Aorta (tissue), 5 donors: ENCODE measurements at regions of chr1 and their contacts with region 1.

Region 1: DNA sequence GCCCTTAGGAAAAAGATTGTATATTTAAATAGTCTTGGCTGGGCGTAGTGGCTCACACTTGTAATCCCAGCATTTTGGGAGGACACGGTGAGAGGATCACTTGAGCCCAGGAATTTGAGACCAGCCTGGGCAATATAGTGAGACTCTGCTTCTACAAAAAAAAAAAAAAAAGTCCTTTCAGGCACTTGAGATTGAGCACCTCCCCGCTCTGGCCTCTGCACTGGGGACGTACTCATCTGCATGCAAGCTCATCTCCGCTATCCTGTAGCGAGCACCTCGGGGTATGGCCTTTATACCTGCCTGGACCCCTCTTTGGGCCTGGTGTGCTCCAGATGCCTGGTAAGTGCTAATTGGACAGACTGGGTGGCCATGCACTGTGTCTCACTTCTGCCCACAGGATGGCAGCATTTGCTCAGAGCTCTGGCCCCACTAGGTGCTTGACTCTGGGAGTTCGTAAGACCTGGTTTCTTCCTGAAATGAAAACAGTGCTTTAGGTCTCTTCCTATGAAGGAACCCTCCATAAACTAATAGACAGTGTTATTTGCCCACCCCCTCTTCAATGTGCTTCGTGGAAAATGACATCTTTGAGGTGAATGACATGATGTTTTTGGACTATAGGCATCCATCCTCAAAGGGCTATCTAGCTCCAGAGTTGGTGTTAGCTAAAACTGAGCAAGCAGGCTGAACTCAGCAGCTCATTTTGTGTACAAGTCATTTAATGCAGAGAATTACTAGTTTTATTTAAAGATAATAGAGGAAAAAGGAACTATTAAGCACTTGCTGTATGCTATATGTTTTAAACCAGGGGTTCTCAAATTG is 61.7 kb upstream of the ADAR start:
- DNase-seq: peak; percentile 78 to 81
- ATAC-seq: peak; percentile 84
- H3K4me3 ChIP-seq: no peak overlapping the region
- H3K27ac ChIP-seq: no peak overlapping the region
- H3K4me1 ChIP-seq: no peaks in the 10 kb centered on the region
- H3K27me3 ChIP-seq: no peaks in the 10 kb centered on the region

Region 2: DNA sequence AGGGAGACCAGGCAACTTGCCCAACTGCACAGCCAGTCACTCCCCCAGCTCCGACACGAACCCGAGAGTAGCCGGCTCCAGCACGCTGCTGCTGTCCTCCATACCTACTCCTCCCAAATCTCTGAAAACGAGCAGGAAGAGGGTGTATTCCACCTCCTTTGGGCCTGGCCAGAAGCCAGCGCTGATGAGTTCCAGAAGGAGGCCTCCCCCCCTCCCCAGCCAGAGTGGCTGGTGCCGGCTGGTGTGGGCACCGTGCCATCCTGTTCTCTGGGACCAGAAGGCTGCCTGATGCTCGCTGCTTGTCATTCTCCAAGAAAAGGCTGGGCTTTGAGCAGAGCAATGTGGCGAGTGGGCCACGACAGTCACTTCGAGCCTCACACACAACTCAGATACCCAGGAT is 178.2 kb after region 1 on chr1:
- intact Hi-C with region 1: no loop called
- DNase-seq: no peak
- ATAC-seq: no peak
- H3K4me3 ChIP-seq: no peak overlapping the region
- H3K27ac ChIP-seq: no peak overlapping the region
- H3K4me1 ChIP-seq: no peaks in the 10 kb centered on the region
- H3K27me3 ChIP-seq: no peaks in the 10 kb centered on the region

Region 3: GRCh38 chr1:154878371-154879022 is 208.8 kb after region 1 on chr1:
- intact Hi-C with region 1: loop called in 1 of 2 experiments (anchors 1 kb)
- DNase-seq: peak; percentile 78 to 92
- ATAC-seq: peak; percentile 87
- H3K4me3 ChIP-seq: no peak overlapping the region
- H3K27ac ChIP-seq: no peak overlapping the region
- H3K4me1 ChIP-seq: no peaks in the 10 kb centered on the region
- H3K27me3 ChIP-seq: no peaks in the 10 kb centered on the region